GM18951 (cell line): ENCODE measurements at regions of chr1 and their contacts with region 1.

Region 1: GRCh38 chr1:227961651-227962225 is 14.0 kb upstream of the WNT9A start:
- POLR2A ChIP-seq: no peak

Region 2: GRCh38 chr1:227489572-227489971 is 472.2 kb before region 1 on chr1:
- in situ Hi-C with region 1: loop called (anchors 25 kb)
- POLR2A ChIP-seq: no peak